Naive thymus-derived CD8-positive, alpha-beta T cell (primary cell): ENCODE measurements at regions of chr3 and their contacts with region 1.

Region 1: GRCh38 chr3:169772897-169773828 is at the start of gene MYNN:
- DNase-seq: peak; percentile 83 to 95 (median 92)
- ATAC-seq: peak; percentile 78 to 81
- H3K4me3 Mint-ChIP-seq: peak within 1 kb of the TSS; percentile 91 to 99 (median 99)
- H3K27ac Mint-ChIP-seq: peak within 1 kb of the TSS; percentile 97 to 100 (median 99)
- H3K4me1 Mint-ChIP-seq: peaks cover 22 to 56% (median 51%) of the 10 kb centered on the region in 4 donors
- H3K27me3 Mint-ChIP-seq: peaks cover 0 to 3% (median 0%) of the 10 kb centered on the region in 5 donors
- polyA plus RNA-seq, gene MYNN: 11.7 to 15.7 (median 13.6) TPM

Region 2: DNA sequence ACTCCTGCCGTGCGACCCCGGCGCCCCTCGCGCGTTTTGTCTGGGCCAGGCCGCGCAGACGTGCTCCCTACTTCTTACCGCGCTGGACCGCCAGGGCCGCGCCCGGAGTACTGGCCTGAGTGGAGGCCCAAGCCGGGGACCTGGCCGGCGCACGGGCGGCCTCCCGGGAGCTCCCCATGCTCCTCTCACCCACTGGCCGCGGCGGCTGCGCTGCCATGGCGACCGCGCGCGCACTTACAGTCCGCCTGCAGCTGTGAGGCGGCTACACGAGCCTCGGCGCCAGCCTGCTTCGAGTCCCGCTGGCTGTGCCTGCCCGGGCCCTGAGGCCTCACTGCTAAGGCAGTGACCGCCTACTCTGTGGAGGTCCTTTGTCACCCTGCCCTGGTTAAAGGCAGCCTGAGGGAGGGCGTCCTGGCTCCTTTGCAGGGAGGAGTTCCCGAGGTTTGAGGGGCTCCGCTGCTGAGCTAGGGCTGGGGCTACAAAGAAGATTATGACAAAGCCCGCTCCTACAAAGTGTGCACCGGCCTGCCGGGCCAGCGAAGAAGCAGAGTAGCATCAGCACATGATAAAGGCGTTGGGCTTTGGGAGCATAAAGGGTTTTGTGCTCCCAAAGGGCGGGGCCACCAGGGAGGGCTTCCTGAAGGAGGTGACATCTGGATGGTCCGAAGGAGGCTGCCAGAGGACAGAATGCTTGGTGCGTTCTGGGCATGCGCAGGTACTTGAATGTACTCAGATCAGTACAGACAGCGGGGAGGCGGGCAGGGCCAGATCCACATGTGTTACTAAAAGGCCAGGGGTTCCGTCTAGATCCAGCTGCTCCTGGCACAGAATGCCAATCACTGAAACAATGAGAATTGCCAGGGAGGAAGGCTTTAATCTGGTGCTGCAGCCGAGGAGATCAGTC is 39.4 kb after region 1 on chr3 and contains the starts of genes LRRC34 and LRRIQ4:
- POLR2A ChIA-PET with region 1: interaction called, 21 read pairs
- DNase-seq: peak; percentile 30 to 81 (median 50)
- ATAC-seq: peak; percentile 62 to 71
- H3K4me3 Mint-ChIP-seq: peak within 1 kb of the TSS; percentile 78 to 93 (median 88)
- H3K27ac Mint-ChIP-seq: peak within 1 kb of the TSS; percentile 42 to 93 (median 79)
- H3K4me1 Mint-ChIP-seq: peaks cover 18 to 24% (median 22%) of the 10 kb centered on the region in 4 donors
- H3K27me3 Mint-ChIP-seq: peaks cover 0 to under 1% (median 0%) of the 10 kb centered on the region in 5 donors
- polyA plus RNA-seq, gene LRRC34: 0.29 to 0.42 (median 0.35) TPM
- polyA plus RNA-seq, gene LRRIQ4: not detected

Region 3: GRCh38 chr3:170037463-170038433 is 264.6 kb after region 1 on chr3 and contains the start of gene GPR160:
- POLR2A ChIA-PET with region 1: interaction called, 13 read pairs
- DNase-seq: peak; percentile 65 to 88 (median 78)
- ATAC-seq: peak; percentile 68 to 74
- H3K4me3 Mint-ChIP-seq: peak within 1 kb of the TSS; percentile 81 to 93 (median 90)
- H3K27ac Mint-ChIP-seq: peak within 1 kb of the TSS in 8 of 10 donors; percentile 2 to 92 (median 84)
- H3K4me1 Mint-ChIP-seq: peaks cover 25 to 54% (median 36%) of the 10 kb centered on the region in 4 donors
- H3K27me3 Mint-ChIP-seq: no peaks in the 10 kb centered on the region
- polyA plus RNA-seq, gene GPR160: 12.5 to 18.3 (median 16.9) TPM